Posterior vena cava (tissue), 2 donors: ENCODE measurements at regions of chr7 and their contacts with region 1.

Region 1: DNA sequence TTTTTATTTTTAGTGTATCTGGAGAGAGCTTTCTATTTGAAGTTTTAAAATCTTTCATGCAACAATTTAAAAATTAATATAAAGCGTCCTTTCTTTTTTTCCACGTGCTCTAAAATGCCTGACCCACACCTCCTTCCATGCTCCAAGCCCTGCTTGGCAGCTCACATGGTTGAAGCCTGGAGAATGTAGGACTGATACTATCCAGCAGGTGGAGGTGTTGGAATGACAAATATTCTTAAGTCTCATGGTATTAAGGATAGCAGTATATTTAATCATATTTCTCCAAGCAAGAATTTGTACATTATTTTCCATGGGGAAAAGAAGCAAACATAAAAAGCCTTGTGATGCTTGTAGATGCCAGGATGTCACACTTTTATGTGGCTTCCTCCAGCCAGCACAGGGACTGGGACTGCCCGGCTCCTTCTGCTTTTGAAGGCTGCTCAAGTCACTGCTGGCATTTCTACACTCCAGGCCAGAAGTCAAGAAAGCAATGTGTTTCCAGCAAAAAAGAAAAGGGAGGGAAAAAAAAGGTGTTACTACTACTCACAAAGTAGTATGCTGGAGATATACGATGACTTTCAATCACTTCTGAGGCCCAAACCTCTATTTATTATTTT is 49.7 kb downstream of the BZW2 start:
- DNase-seq: no peak

Region 2: DNA sequence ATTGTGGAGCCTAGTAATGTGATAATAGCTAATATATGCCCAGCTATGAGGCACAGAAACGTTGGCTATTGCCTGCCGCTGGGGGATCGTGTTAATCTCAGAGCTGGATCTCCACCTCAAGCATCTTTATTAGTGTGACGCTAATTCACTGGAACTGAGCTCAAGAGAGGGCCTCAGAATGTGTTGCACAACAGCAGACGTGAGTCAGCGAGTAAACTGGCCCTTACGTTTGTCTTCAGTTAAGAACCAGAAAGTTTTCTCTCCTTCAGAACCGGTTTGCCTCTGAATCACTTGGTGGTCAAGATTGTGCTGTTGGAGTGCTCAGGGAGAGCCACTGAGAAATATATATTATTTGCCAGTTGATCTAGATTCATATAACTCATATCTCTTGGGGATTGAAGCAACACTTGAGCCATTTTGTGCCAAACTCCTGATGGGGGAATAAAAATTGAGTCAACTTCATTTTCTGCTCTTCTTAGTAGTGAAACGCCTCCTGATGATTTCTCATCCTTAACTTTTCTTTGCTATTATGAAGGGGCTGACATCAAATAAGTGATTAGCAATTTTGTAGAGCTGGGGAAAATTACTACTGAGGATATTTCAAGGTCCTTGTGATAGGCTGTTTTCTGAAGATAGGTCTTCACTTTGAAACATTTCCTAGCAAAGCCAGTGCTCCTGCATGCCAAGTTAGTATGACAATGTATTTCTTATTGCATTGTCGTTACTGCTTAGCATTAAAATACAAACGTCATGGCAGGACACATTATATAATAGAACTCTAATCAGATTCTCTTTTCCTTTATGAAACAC is 27.5 kb before region 1 on chr7:
- intact Hi-C with region 1: loop called in 1 of 2 experiments (anchors 2 kb)
- DNase-seq: peak; percentile 86

Region 3: GRCh38 chr7:16719699-16720098 is 24.0 kb after region 1 on chr7:
- intact Hi-C with region 1: no loop called
- DNase-seq: no peak

Region 4: DNA sequence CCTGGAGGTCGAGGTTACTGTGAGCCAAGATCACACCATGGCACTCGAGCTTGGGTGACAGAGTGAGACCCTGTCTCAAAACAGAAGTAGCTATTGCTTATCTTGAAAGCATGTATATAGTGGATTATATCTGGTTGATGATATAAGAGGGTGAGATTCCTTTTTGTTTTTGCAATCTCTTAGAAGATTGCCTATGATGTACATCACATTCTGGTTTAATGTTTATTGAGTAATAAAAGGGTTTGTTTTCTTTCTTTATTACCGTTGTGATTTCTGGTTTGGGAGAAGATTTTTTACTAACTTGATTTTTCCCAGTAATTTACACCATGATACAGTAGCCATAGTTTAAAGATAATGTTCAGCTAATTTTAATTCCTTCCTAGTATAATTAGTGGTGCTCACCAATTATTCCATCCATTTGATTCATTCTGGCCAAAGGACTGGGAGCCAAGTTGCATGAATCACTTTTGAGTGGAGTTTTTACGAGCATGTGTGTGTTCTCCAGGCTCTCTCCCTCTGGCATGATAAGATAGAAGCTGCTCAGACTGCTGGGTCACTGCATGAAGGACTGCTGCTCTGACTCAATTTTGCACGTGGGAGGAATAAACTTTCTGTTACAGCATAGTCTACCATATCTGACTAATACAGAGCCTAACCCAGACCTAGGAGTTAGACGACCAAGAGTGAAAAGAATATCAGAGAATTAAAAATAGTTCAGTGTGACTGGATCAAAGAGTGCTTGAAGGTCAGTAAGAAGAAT is 44.3 kb after region 1 on chr7:
- intact Hi-C with region 1: no loop called
- DNase-seq: no peak

Region 5: GRCh38 chr7:17307000-17307399 is 611.3 kb after region 1 on chr7:
- intact Hi-C with region 1: no loop called
- DNase-seq: no peak

Region 6: DNA sequence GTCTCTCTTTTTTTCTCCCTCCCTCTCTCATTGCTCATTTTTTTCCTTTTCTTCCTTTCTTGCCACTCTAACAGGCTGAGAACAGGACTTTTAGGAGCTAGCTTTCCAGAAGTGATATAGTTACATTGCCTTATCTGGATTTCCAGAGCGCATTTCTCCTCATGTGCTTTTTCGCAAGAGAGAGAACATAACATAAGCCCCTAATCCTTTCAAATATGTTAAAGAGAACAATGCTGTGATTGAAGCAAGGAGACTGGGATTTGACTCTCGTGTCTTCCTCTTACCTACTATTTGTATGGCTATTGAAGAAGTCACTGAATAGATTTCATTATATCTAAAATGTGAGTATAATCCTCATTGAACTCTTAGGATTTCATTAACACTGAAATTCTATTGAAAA is 1433.1 kb after region 1 on chr7:
- intact Hi-C with region 1: no loop called
- DNase-seq: no peak